Adrenal gland (tissue), 19 donors: ENCODE measurements at regions of chr5 and their contacts with region 1.

Region 1: DNA sequence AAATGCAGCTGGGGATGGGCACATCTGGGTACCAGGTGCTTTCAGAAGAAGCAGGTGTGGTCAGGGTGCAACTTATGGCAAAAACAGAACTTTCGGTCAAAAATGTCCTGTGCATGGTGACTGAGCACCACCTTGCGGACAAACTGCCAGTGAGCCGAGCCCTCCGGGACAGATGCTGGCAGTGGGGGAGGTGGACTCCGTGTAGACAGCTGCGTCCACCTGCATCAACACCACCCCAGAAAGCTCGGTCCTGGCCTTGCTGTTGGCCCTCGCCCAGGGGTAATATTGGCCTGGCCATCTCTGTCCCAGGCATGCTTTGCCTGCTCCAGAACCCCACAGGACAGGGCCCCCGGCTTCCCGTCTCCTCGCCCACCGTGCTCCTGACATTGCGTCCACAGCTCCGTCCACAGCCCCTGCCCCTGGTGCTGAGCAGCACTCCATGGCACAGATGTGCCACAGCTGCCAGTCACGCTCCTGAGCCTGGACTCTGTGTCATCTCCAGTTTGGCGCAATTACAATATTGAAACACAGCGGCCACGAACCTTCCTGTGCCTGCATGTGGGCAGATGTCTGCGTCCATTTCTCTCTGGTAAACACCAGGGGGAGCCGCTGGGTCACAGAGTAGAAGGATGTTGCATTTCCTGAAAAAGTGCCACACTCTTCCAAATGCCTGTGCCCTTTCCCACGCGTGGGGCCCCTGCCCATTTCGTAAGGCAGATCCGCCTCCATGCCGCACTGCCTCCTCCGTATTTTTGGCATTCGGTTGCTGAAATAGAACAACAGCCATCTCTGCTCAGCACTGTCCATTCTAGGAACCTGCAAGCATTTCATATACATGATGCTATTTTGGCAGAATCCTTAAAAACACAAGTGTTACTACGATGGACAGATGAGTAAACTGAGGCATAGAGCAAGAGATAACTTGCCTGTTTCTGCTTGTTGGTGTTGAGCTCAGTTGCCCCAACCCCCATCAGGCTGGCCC is 33.4 kb upstream of the SLC6A19 start:
- DNase-seq: peak; percentile 63 to 86 (median 83)
- H3K4me3 ChIP-seq: no peak overlapping the region
- H3K27ac ChIP-seq: no peak overlapping the region
- H3K4me1 ChIP-seq: peaks cover 0 to 4% of the 10 kb centered on the region in 2 donors
- H3K27me3 ChIP-seq: no peaks in the 10 kb centered on the region
- CTCF ChIP-seq: peak; percentile 47 to 77 (median 62)
- POLR2A ChIP-seq: no peak

Region 2: GRCh38 chr5:923281-923873 is 244.6 kb before region 1 on chr5:
- intact Hi-C with region 1: loop called in 1 of 2 experiments (anchors 5 kb)
- DNase-seq: peak; percentile 83 to 90 (median 88)
- H3K4me3 ChIP-seq: no peak overlapping the region
- H3K27ac ChIP-seq: no peak overlapping the region
- H3K4me1 ChIP-seq: peaks cover 6 to 8% of the 10 kb centered on the region in 2 donors
- H3K27me3 ChIP-seq: peaks cover 7% of the 10 kb centered on the region
- CTCF ChIP-seq: peak; percentile 78 to 94 (median 88)
- POLR2A ChIP-seq: no peak